ENCODE measurements at regions of chr1 and their contacts with region 1.

Region 1: GRCh38 chr1:33367485-33368405 is 46.8 kb upstream of the A3GALT2 start:
- DNase-seq: peak; percentile 84
- H3K4me3 Mint-ChIP-seq: no peak overlapping the region
- H3K27ac Mint-ChIP-seq: no peak overlapping the region
- H3K4me1 Mint-ChIP-seq: peaks cover 6% of the 10 kb centered on the region
- H3K27me3 Mint-ChIP-seq: no peaks in the 10 kb centered on the region
- CTCF ChIP-seq: peak; percentile 95

Region 2: DNA sequence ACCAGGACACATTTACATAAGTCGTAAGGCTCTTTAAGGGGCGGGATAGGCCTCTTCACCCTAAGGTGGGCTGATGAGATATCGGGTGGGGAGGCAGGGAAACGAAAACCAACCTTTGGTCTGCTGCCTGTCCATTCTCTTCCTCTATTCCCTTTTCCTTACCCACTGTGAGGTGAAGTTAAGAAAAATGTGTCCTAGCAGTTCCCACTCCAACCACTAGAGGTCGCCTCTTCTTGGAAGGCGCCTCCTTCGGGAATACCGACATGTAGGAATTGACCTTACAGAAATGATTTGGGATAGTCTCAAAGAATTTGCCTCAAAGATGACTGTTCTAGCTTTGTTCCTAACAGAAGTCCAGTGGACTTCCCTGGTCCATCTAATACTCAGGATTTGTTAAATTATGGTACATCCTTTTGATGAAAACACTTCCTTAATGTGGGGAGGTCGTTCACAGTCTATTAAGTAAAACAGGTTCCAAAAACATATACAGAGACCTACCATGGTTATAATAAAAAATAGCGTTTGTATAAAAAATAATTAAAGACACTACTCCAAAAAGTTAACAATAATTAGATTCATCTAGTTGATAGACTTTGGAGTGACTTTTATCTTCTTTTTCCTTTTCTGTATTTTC is 272.7 kb before region 1 on chr1:
- CTCF ChIA-PET with region 1: no interaction called
- POLR2A ChIA-PET with region 1: no interaction called
- intact Hi-C with region 1: loop called (anchors 2 kb)
- DNase-seq: peak; percentile 70
- H3K4me3 Mint-ChIP-seq: no peak overlapping the region
- H3K27ac Mint-ChIP-seq: no peak overlapping the region
- H3K4me1 Mint-ChIP-seq: peaks cover 18% of the 10 kb centered on the region
- H3K27me3 Mint-ChIP-seq: no peaks in the 10 kb centered on the region
- CTCF ChIP-seq: peak; percentile 91

Region 3: DNA sequence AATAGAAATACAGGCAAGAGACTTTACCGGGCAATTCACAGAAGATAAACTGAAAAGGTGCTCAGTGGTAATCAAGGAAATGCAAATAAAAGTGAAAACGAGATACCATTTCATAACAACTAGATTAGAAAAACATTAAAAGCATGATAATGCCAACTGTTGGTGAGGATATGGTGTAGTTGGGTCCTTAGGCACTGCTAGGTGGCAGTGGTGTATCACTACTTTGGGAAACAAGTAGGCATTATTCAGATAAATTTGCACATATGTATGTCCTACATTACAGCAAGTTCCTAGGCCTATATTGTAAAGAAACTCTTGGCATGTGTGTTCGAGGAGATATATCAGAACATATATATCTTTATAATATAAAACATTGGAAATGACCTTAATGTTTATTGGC is 255.8 kb before region 1 on chr1:
- CTCF ChIA-PET with region 1: interaction called, 5 read pairs
- POLR2A ChIA-PET with region 1: no interaction called
- intact Hi-C with region 1: loop called (anchors 2 kb)
- DNase-seq: peak; percentile 29
- H3K4me3 Mint-ChIP-seq: no peak overlapping the region
- H3K27ac Mint-ChIP-seq: no peak overlapping the region
- H3K4me1 Mint-ChIP-seq: no peaks in the 10 kb centered on the region
- H3K27me3 Mint-ChIP-seq: no peaks in the 10 kb centered on the region
- CTCF ChIP-seq: peak; percentile 27

Region 4: GRCh38 chr1:33219881-33220661 is 147.7 kb before region 1 on chr1:
- CTCF ChIA-PET with region 1: interaction called, 7 read pairs
- POLR2A ChIA-PET with region 1: no interaction called
- intact Hi-C with region 1: loop called (anchors 1 kb)
- DNase-seq: peak; percentile 84
- H3K4me3 Mint-ChIP-seq: no peak overlapping the region
- H3K27ac Mint-ChIP-seq: peak overlapping the region; percentile 95
- H3K4me1 Mint-ChIP-seq: peaks cover 40% of the 10 kb centered on the region
- H3K27me3 Mint-ChIP-seq: no peaks in the 10 kb centered on the region
- CTCF ChIP-seq: no peak

Region 5: GRCh38 chr1:33327587-33328315 is 40.0 kb before region 1 on chr1:
- CTCF ChIA-PET with region 1: interaction called, 4 read pairs
- POLR2A ChIA-PET with region 1: no interaction called
- intact Hi-C with region 1: loop called (anchors 1 kb)
- DNase-seq: peak; percentile 98
- H3K4me3 Mint-ChIP-seq: no peak overlapping the region
- H3K27ac Mint-ChIP-seq: peak overlapping the region; percentile 84
- H3K4me1 Mint-ChIP-seq: peaks cover 51% of the 10 kb centered on the region
- H3K27me3 Mint-ChIP-seq: no peaks in the 10 kb centered on the region
- CTCF ChIP-seq: no peak

Region 6: DNA sequence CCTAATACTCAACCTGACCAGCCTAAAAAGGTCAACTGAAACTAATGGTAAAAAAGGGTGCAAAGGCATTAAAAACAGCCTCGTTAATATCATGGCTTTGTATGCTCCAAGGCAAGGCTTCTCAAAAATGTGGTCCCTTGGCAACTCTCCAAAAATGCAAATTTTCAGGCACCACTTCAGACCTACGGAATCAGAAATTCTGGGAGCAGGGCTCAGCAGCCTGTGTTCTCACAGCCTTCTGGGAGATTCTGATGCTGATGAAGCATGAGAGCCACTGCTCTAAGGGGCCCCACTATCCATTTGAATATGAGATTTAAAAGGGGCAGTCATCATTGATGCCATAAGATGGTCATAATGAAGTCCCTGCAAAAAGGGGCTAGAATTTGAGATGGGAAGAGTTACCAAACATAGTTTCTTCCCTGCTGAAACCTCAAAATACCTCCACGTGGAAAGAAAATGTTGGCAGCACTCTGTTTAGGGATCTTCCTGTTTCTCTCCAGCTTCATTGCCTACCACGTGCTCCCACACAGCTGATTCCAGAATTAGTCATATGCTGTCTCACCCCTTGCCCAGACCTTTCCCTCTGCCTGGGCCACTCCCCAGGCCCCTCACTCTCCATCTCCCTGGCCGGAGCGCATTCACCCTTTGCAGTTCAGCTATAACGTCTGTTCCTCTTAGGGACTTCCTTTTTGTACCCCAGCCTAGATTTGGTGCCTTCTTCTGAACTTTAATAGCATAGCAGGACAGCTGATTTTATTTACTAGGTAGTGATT is 16.5 kb after region 1 on chr1:
- CTCF ChIA-PET with region 1: interaction called, 12 read pairs
- POLR2A ChIA-PET with region 1: interaction called, 6 read pairs
- intact Hi-C with region 1: no loop called
- DNase-seq: peak; percentile 57
- H3K4me3 Mint-ChIP-seq: no peak overlapping the region
- H3K27ac Mint-ChIP-seq: peak overlapping the region; percentile 61
- H3K4me1 Mint-ChIP-seq: peaks cover 42% of the 10 kb centered on the region
- H3K27me3 Mint-ChIP-seq: no peaks in the 10 kb centered on the region
- CTCF ChIP-seq: no peak

Region 7: GRCh38 chr1:33548319-33548718 is 180.6 kb after region 1 on chr1:
- CTCF ChIA-PET with region 1: no interaction called
- POLR2A ChIA-PET with region 1: no interaction called
- intact Hi-C with region 1: no loop called
- DNase-seq: no peak
- H3K4me3 Mint-ChIP-seq: no peak overlapping the region
- H3K27ac Mint-ChIP-seq: no peak overlapping the region
- H3K4me1 Mint-ChIP-seq: no peaks in the 10 kb centered on the region
- H3K27me3 Mint-ChIP-seq: peaks cover 34% of the 10 kb centered on the region
- CTCF ChIP-seq: no peak

Region 8: DNA sequence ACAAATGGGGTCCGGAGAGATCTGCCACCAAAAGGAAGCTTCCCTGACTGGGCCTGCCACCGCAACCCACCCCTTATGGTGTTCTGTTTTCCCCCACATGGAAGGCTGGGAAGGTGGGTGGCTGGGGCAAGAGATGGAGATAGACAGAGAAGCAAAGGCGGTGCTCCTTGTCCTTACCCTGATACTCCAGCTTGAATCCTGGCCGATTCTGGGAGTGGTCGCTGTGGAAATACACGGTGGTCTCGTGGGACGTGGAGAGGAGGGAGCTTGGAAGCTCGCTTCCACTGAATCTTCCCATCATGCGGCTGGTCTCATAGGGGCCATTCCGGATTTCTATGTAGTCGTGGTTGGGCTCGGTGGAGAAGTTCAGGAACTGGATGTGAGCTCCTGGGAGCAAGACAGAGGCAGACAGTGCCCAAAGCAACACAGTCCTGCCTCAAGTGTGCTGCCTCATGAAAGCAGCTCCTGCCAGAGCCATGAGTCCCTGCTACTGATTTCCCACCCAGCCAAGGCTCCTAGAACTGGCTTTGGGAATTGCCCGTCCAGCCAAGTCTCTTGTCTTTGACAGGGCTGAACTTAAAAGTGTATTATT is 243.2 kb after region 1 on chr1:
- CTCF ChIA-PET with region 1: no interaction called
- POLR2A ChIA-PET with region 1: no interaction called
- intact Hi-C with region 1: loop called (anchors 5 kb)
- DNase-seq: no peak
- H3K4me3 Mint-ChIP-seq: no peak overlapping the region
- H3K27ac Mint-ChIP-seq: no peak overlapping the region
- H3K4me1 Mint-ChIP-seq: no peaks in the 10 kb centered on the region
- H3K27me3 Mint-ChIP-seq: peaks cover 28% of the 10 kb centered on the region
- CTCF ChIP-seq: no peak

Measured in MCF 10A (cell line).